GM12878 (cell line): ENCODE measurements at regions of chr5 and their contacts with region 1.

Region 1: DNA sequence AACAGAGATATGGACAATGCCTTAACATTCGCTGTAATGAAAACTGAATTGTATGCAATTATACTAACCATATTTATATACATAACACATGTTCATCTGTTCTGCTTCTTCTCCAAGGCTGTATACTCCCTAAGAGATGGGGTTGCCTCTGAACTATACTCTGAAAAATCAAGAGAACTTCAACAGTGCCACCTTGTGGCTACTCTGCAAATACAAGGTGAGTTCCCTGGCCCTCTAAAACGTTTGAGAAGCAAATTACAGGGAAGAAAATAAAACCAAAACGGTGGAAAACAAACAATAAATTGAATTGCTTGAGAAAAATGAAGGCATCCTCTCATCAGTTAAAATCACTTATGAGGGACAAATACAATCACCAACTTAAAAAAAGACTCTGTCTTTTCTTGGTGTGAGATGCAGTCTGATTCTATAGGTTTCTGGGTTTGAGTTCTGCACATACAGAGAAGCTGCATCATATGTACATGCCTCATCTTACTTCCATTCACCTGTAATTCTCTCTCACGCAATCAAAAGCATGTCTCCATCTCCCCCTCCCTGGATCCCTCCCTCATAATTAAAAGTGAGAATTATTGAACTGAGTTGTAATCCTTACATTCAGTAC is 98.6 kb downstream of the FBXW11 start:
- DNase-seq: no peak
- ATAC-seq: peak; percentile 87
- H3K4me3 ChIP-seq: no peak overlapping the region
- H3K27ac ChIP-seq: no peak overlapping the region
- H3K4me1 ChIP-seq: peaks cover 29% of the 10 kb centered on the region
- H3K27me3 ChIP-seq: no peaks in the 10 kb centered on the region
- CTCF ChIP-seq: peak; percentile 65 to 76 (median 72)
- EP300 ChIP-seq: no peak
- POLR2A ChIP-seq: no peak
- RAD21 ChIP-seq: peak; percentile 75

Region 2: GRCh38 chr5:171207256-171207847 is 700.5 kb before region 1 on chr5:
- CTCF ChIA-PET with region 1: interaction called, 3 read pairs
- POLR2A ChIA-PET with region 1: no interaction called
- RAD21 ChIA-PET with region 1: no interaction called
- SMC1A ChIA-PET with region 1: no interaction called
- in situ Hi-C with region 1: no loop called
- intact Hi-C with region 1: loop called (anchors 5 kb)
- DNase-seq: no peak
- ATAC-seq: peak; percentile 54
- H3K4me3 ChIP-seq: no peak overlapping the region
- H3K27ac ChIP-seq: no peak overlapping the region
- H3K4me1 ChIP-seq: no peaks in the 10 kb centered on the region
- H3K27me3 ChIP-seq: no peaks in the 10 kb centered on the region
- CTCF ChIP-seq: peak; percentile 26 to 47 (median 43); a peak in 4 of 6 replicates
- EP300 ChIP-seq: no peak
- POLR2A ChIP-seq: no peak
- RAD21 ChIP-seq: peak; percentile 52

Region 3: GRCh38 chr5:171484460-171484899 is 423.4 kb before region 1 on chr5:
- CTCF ChIA-PET with region 1: interaction called, 16 read pairs
- POLR2A ChIA-PET with region 1: no interaction called
- RAD21 ChIA-PET with region 1: interaction called, 4 read pairs
- SMC1A ChIA-PET with region 1: interaction called, 8 read pairs
- in situ Hi-C with region 1: loop called (anchors 5 kb)
- intact Hi-C with region 1: loop called (anchors 2 kb)
- DNase-seq: no peak
- ATAC-seq: peak; percentile 88
- H3K4me3 ChIP-seq: no peak overlapping the region
- H3K27ac ChIP-seq: no peak overlapping the region
- H3K4me1 ChIP-seq: peaks cover 3% of the 10 kb centered on the region
- H3K27me3 ChIP-seq: no peaks in the 10 kb centered on the region; a peak in 3 of 4 replicates
- CTCF ChIP-seq: peak; percentile 64 to 82 (median 73)
- EP300 ChIP-seq: no peak
- POLR2A ChIP-seq: no peak
- RAD21 ChIP-seq: peak; percentile 61

Region 4: GRCh38 chr5:171813813-171814811 is 93.7 kb before region 1 on chr5:
- CTCF ChIA-PET with region 1: no interaction called
- POLR2A ChIA-PET with region 1: no interaction called
- RAD21 ChIA-PET with region 1: no interaction called
- SMC1A ChIA-PET with region 1: no interaction called
- in situ Hi-C with region 1: no loop called
- intact Hi-C with region 1: no loop called
- DNase-seq: no peak
- ATAC-seq: no peak
- H3K4me3 ChIP-seq: no peak overlapping the region
- H3K27ac ChIP-seq: no peak overlapping the region
- H3K4me1 ChIP-seq: no peaks in the 10 kb centered on the region
- H3K27me3 ChIP-seq: no peaks in the 10 kb centered on the region; a peak in 2 of 4 replicates
- CTCF ChIP-seq: no peak
- EP300 ChIP-seq: no peak
- POLR2A ChIP-seq: no peak
- RAD21 ChIP-seq: no peak

Region 5: GRCh38 chr5:172035039-172035438 is 127.2 kb after region 1 on chr5:
- CTCF ChIA-PET with region 1: interaction called, 123 read pairs
- POLR2A ChIA-PET with region 1: interaction called, 3 read pairs
- RAD21 ChIA-PET with region 1: interaction called, 82 read pairs
- SMC1A ChIA-PET with region 1: interaction called, 92 read pairs
- in situ Hi-C with region 1: loop called (anchors 5 kb)
- intact Hi-C with region 1: loop called (anchors 1 kb)
- DNase-seq: peak; percentile 33
- ATAC-seq: peak; percentile 89
- H3K4me3 ChIP-seq: no peak overlapping the region
- H3K27ac ChIP-seq: no peak overlapping the region; the same call in 1 of the 2 replicates
- H3K4me1 ChIP-seq: peaks cover 5% of the 10 kb centered on the region
- H3K27me3 ChIP-seq: no peaks in the 10 kb centered on the region
- CTCF ChIP-seq: no peak
- EP300 ChIP-seq: no peak
- POLR2A ChIP-seq: no peak
- RAD21 ChIP-seq: no peak